ENCODE measurements at regions of chr12 and their contacts with region 1.

Region 1: DNA sequence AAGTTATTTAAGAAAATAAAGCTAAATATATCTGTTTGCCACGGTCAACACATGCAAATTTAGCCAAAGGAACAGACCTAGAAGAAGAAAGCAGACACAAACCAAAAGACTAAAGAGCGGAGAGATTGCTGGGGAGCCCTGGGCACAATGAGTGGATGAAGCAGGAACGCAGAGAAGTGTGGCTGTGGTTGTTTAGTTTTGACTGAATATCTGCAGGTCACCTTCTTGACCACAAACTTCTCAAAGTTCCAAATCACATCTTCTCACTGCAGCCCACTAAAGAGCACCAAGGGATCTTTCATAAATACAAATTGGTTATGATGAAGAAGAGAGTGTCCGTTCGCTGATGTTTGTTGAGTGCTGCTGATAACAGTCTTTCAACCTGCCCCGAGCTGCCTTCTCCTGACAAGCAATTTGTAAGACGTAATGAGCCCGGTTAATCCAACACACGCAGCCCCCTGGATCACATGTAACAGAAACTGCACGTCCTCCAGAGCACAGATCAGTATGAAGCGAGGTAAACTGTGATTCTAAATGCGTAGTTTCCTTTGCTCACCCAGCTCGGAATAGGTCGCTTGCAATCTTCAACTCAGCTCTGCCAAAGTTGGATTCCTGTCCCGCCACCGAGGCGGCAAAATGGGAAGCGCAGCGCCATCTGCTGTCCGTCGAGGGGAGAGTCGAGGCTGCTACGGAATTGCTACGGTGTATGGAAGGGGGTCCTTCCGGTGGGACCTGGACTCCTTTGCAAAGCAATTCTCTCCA is 120.8 kb downstream of the GXYLT1 start:
- DNase-seq: peak; percentile 48 to 92
- H3K4me3 ChIP-seq: no peak overlapping the region
- CTCF ChIP-seq: peak in 1 of 3 donors; percentile 45
- POLR2A ChIP-seq: no peak

Region 2: DNA sequence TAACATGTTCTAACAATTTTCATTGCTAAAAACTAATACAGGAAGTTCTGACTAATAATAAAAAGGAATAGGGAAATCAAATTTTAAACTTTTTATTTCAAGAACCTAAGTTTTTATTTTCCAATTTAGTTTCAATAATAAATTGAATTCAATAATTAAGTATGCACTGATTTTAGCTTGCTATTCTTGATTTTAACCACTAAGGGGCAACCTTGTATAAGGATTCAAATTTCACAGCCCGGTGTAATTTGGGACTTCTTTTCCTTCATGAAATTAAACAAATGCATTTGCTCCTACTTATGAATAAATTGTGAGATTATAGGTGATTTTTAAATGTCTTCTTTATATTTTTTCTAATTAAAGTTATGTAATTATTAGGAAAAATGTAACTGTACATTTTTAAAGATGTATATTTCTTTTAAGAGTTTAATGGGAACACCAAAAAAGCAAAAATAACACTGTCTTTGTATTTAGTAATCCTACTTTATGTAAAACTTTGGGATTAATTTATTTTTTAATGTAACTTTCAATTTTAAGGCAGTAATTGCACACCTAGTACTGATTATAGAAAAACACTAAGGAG is 1077.2 kb before region 1 on chr12:
- intact Hi-C with region 1: loop called (anchors 10 kb)
- DNase-seq: no peak
- H3K4me3 ChIP-seq: no peak overlapping the region
- CTCF ChIP-seq: peak in 1 of 3 donors; percentile 19
- POLR2A ChIP-seq: no peak